Sigmoid colon (tissue), 7 donors: ENCODE measurements at regions of chr10 and their contacts with region 1.

Region 1: DNA sequence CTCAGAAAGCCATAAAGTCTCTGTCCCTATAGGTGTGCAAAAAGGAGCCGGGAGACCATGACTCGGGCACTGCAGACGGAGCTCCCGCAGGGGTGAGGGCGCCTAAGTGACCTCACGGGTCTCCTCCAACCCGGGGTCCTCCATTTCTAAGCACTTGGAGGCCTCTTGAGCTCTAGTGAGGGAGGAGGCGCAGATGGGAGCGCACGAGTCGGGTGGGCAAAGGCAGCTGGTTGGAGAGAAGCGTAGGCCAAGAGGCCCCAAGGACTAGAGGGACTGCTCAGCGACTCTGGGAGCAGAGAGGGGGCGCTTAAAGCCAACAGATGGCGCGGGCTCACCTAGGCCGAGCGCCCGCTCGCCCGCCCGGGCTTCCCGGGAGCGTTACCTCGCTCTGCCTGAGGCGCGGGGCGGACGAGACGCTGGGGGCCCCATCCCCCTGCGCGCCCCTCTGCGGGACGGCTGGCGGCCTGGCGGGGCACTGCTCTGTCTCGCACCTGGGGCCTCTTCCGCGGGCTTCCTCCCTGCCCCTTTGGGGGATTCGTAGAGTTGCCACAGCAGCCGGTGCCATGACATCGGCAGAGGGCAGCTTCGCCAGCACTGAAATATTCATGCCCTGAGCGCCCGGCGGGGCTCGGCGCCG is 518 bp upstream of the CDH23 start:
- DNase-seq: peak; percentile 75
- H3K4me3 ChIP-seq: peak overlapping the region; percentile 43 to 61 (median 52)
- H3K27ac ChIP-seq: peak overlapping the region in 3 of 4 donors; percentile 19 to 79 (median 63)
- H3K4me1 ChIP-seq: peaks cover 0 to 26% (median 18%) of the 10 kb centered on the region in 4 donors
- H3K27me3 ChIP-seq: peaks cover 23 to 46% (median 38%) of the 10 kb centered on the region in 3 donors
- CTCF ChIP-seq: peak; percentile 21 to 55 (median 38)
- EP300 ChIP-seq: no peak
- POLR2A ChIP-seq: no peak

Region 2: DNA sequence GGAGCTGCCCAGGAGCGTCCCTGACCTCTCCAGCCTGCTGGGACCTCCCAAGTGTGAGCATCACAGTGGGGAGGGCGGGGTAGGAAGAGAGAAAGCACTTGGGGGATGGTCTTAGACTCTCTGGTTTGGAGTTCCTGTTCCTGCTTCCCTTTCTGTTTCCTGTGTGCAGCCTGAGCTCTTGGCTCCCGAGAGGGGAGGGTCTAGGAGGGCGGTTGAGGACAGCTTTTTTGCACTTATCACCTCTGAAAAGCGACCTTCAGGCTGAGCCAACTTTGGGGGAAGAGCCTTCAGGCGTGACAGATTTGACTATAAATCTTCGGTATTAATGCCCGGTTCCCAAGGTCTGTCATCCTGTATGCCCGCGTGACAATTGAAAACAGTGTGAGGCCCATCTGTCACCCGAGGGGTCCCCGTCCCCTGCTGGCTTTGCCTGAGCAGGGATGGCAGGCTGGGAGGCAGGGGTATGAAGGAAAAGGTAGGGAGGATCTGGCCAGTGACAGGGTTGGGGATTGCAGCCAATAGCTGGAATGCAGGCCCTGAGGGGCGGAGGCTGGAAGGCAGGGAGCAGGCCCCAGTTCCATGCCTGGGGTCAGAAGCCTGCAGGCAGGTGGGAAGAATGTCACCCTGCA is 79.2 kb after region 1 on chr10:
- intact Hi-C with region 1: loop called (anchors 5 kb)
- DNase-seq: no peak
- H3K4me3 ChIP-seq: no peak overlapping the region
- H3K27ac ChIP-seq: peak overlapping the region in 1 of 4 donors; percentile 6
- H3K4me1 ChIP-seq: peaks cover 0 to 27% (median 22%) of the 10 kb centered on the region in 4 donors
- H3K27me3 ChIP-seq: no peaks in the 10 kb centered on the region
- CTCF ChIP-seq: no peak
- EP300 ChIP-seq: no peak
- POLR2A ChIP-seq: no peak